Left ventricle myocardium inferior (tissue), 1 donor: ENCODE measurements at regions of chr19 and their contacts with region 1.

Region 1: DNA sequence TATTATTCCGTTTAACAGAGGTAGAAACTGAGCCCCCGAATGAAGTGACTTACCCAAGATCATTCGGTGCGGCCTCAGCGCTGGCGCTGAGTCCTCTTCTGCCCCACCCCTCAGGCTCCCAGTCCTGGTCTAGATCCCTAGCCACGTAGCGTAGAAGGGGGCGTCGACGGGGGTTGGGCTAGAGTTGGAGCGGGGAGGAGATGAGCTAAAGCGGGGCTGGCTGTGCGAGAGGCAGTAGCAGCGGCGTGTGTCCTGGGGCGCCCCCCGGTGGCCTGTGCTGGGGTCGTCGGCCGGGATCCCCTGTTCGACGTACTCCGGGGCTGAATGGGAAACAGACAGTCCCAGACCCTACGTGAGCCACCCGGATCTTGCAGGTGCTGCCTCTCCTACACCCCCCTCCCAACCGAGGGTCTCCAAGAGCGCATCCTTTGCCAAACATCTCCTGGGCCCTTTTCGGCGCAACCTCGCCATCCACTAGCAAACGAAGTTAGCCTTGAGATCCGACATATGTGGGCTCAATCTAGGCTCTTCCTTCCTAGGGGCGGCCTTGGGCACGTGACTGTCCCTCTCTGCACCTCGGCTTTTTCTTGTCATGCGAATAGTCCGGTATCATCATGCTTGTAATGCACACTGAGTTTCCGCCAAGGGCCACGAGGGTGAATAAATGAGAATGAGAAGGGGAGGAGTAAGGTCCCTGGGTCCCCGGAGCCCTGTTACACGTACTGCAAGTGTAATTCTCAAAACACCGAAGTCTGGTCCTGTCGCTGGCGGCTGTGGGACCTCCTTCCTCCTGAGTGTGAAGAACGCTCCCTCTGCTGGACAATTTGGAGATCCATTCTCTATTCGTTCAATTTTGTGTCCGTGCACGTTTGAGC is 47.7 kb downstream of the CYP4F22 start:
- DNase-seq: peak; percentile 90
- H3K4me3 ChIP-seq: peak overlapping the region; percentile 52
- H3K27ac ChIP-seq: peak overlapping the region; percentile 37
- H3K4me1 ChIP-seq: peaks cover 20% of the 10 kb centered on the region
- H3K27me3 ChIP-seq: peaks cover 86% of the 10 kb centered on the region
- CTCF ChIP-seq: peak; percentile 76

Region 2: GRCh38 chr19:15091901-15092753 is 463.9 kb before region 1 on chr19:
- intact Hi-C with region 1: loop called (anchors 10 kb)
- DNase-seq: no peak
- H3K4me3 ChIP-seq: peak overlapping the region; percentile 33
- H3K27ac ChIP-seq: no peak overlapping the region
- H3K4me1 ChIP-seq: peaks cover 4% of the 10 kb centered on the region
- H3K27me3 ChIP-seq: peaks cover 31% of the 10 kb centered on the region
- CTCF ChIP-seq: peak; percentile 76

Region 3: GRCh38 chr19:15177269-15178116 is 378.5 kb before region 1 on chr19:
- intact Hi-C with region 1: loop called (anchors 5 kb)
- DNase-seq: peak; percentile 82
- H3K4me3 ChIP-seq: peak overlapping the region; percentile 55
- H3K27ac ChIP-seq: peak overlapping the region; percentile 5
- H3K4me1 ChIP-seq: peaks cover 15% of the 10 kb centered on the region
- H3K27me3 ChIP-seq: peaks cover 22% of the 10 kb centered on the region
- CTCF ChIP-seq: peak; percentile 99